Activated CD4-positive, alpha-beta memory T cell treated with anti-CD3 and anti-CD28 coated beads for 36 hours (primary cell): ENCODE measurements at regions of chr1 and their contacts with region 1.

Region 1: DNA sequence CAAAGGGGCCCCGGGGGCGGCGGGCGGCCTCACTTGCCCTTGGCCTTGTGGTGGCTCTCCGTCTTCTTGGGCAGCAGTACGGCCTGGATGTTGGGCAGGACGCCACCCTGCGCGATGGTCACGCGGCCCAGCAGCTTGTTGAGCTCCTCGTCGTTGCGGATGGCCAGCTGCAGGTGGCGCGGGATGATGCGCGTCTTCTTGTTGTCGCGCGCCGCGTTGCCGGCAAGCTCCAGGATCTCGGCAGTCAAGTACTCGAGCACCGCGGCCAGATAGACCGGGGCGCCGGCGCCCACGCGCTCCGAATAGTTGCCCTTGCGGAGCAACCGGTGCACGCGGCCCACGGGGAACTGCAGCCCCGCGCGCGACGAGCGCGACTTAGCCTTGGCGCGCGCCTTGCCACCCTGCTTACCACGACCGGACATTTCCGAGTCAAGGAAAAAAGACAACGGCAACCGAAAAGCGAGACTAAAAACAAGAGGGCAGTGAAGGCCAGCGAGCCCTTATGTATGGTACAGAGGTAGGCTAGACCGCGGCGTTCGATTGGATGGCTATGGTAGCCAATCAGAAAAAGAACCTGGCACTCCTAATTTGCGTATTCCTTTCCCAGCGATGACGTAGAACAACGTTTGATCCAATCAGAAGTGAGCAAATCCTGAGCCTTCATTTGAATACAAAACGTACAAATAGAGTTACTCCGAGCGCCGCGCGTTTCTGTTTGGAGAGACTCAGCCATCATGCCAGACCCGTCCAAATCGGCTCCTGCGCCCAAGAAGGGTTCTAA is 29.6 kb upstream of the RNF187 start:
- DNase-seq: peak; percentile 92
- H3K4me3 Mint-ChIP-seq: peak overlapping the region; percentile 98
- H3K27ac Mint-ChIP-seq: peak overlapping the region; percentile 94
- H3K4me1 Mint-ChIP-seq: peaks cover 38% of the 10 kb centered on the region
- H3K27me3 Mint-ChIP-seq: peaks cover 1% of the 10 kb centered on the region

Region 2: DNA sequence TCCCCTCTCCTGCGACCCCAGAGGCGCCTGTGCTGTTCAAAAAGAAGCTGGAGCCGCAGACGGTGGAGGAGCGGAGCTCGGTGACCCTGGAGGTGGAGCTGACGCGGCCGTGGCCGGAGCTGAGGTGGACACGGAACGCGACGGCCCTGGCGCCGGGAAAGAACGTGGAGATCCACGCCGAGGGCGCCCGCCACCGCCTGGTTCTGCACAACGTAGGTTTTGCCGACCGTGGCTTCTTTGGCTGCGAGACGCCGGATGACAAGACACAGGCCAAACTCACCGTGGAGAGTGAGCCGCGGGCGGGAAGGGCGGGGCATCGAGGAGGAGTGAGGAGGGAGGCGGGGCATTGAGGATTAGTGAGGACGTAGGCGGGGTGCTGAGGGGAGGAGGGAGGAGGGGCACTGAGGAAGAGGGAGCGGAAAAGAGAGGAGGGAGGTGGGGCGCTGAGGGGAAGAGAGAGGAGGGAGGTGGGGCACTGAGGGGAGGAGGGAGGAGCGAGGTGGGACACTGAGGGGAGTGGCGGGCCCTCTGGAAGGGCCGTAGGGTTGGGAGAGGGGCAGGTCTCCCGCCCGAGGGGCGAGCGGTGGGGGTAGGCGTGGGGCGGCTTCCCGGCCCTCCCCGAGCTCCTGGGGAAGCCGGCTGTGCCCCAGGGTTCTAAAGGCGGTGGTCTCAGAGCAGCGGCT is 181.7 kb before region 1 on chr1:
- CTCF ChIA-PET with region 1: no interaction called
- POLR2A ChIA-PET with region 1: interaction called, 3 read pairs
- intact Hi-C with region 1: loop called (anchors 5 kb)
- DNase-seq: peak; percentile 94
- H3K4me3 Mint-ChIP-seq: peak overlapping the region; percentile 70
- H3K27ac Mint-ChIP-seq: no peak overlapping the region
- H3K4me1 Mint-ChIP-seq: peaks cover 6% of the 10 kb centered on the region
- H3K27me3 Mint-ChIP-seq: no peaks in the 10 kb centered on the region

Region 3: GRCh38 chr1:228416217-228416933 is 41.2 kb before region 1 on chr1 and contains the start of gene TRIM17:
- CTCF ChIA-PET with region 1: no interaction called
- POLR2A ChIA-PET with region 1: no interaction called
- intact Hi-C with region 1: loop called (anchors 2 kb)
- DNase-seq: peak; percentile 65
- H3K4me3 Mint-ChIP-seq: peak within 1 kb of the TSS; percentile 74
- H3K27ac Mint-ChIP-seq: no peak within 1 kb of the TSS
- H3K4me1 Mint-ChIP-seq: peaks cover 12% of the 10 kb centered on the region
- H3K27me3 Mint-ChIP-seq: peaks cover 9% of the 10 kb centered on the region
- total RNA-seq, gene TRIM17: 1.5 to 1.6 TPM

Region 4: DNA sequence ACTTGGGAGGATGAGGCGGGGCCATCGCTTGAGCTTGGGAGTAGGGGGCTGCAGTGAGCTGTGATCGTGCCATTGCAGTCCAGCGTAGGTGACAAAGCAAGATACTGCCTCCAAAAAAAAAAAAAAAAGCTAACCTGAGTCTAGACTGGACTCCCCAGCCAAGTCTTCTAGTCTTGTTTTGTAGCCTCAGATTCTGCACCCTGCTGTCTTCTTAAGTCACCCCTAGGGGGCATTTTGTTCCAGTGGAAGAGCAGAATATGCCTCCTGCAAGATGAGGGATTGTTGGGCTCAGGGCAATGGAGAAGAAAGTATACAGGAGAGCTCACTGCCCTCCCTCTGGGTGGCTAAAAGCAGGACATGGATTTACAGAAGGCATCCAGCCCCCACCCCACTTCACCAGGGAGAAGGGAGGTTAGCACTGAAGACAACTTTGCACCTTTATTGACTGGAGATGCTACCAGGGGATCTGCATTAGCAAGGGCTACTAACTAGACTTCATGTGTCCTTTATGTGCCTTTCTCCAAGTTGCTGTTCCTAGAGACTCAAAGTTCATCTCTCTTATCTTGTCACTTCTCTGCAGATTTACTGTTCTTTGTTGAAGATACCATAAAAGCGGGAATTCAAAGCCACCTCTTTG is 14.3 kb after region 1 on chr1:
- CTCF ChIA-PET with region 1: interaction called, 10 read pairs
- POLR2A ChIA-PET with region 1: interaction called, 5 read pairs
- intact Hi-C with region 1: no loop called
- DNase-seq: peak; percentile 32
- H3K4me3 Mint-ChIP-seq: no peak overlapping the region
- H3K27ac Mint-ChIP-seq: no peak overlapping the region
- H3K4me1 Mint-ChIP-seq: peaks cover 7% of the 10 kb centered on the region
- H3K27me3 Mint-ChIP-seq: peaks cover 6% of the 10 kb centered on the region

Region 5: GRCh38 chr1:228500901-228501871 is 43.6 kb after region 1 on chr1:
- CTCF ChIA-PET with region 1: interaction called, 11 read pairs
- POLR2A ChIA-PET with region 1: no interaction called
- intact Hi-C with region 1: loop called (anchors 1 kb)
- DNase-seq: peak; percentile 96
- H3K4me3 Mint-ChIP-seq: peak overlapping the region; percentile 28
- H3K27ac Mint-ChIP-seq: peak overlapping the region; percentile 30
- H3K4me1 Mint-ChIP-seq: peaks cover 25% of the 10 kb centered on the region
- H3K27me3 Mint-ChIP-seq: no peaks in the 10 kb centered on the region